ENCODE measurements at regions of chr1 and their contacts with region 1.

Region 1: DNA sequence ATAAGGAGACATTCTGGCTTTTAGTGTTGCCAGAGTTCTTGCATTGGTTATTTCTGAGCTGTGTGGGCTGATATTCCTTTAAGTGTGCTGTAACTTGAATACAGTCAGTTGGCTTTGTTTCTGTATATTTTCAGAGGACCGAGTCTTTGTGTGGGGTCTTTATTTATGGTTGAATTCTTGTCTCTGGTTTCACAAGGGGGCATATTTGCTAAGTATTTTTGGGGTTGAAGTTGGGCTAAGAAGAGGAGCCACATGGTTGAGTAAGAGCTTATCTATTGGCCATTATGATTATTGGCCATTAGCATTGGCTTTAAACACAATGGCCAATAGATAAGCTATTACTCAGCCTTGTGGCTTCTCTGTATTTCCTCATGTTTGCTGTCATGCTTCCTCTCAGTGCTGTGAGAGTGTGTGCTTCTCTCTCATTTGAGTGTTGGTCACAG is 26.3 kb upstream of the PTGFR start:
- DNase-seq: no peak
- H3K4me3 ChIP-seq: no peak overlapping the region
- H3K27ac ChIP-seq: no peak overlapping the region
- H3K4me1 ChIP-seq: no peaks in the 10 kb centered on the region
- H3K27me3 ChIP-seq: no peaks in the 10 kb centered on the region
- CTCF ChIP-seq: no peak
- POLR2A ChIP-seq: no peak

Region 2: GRCh38 chr1:78355656-78356055 is 108.8 kb before region 1 on chr1:
- intact Hi-C with region 1: loop called in 1 of 2 experiments (anchors 10 kb)
- DNase-seq: no peak
- H3K4me3 ChIP-seq: no peak overlapping the region
- H3K27ac ChIP-seq: no peak overlapping the region
- H3K4me1 ChIP-seq: no peaks in the 10 kb centered on the region
- H3K27me3 ChIP-seq: no peaks in the 10 kb centered on the region
- CTCF ChIP-seq: no peak
- POLR2A ChIP-seq: no peak

Measured in adrenal gland (tissue), 19 donors.